Activated CD8-positive, alpha-beta T cell treated with anti-CD3 and anti-CD28 coated beads, Interleukin-2, amount 10 ng/mL, durations not matched to agents 7 days and 5 days (primary cell): ENCODE measurements at regions of chr6 and their contacts with region 1.

Region 1: GRCh38 chr6:29016559-29017427 is 11.7 kb upstream of the ZNF311 start:
- DNase-seq: peak; percentile 90
- ATAC-seq: peak; percentile 90
- H3K4me3 Mint-ChIP-seq: peak overlapping the region; percentile 83
- H3K27ac Mint-ChIP-seq: peak overlapping the region; percentile 83
- H3K4me1 Mint-ChIP-seq: peaks cover 15% of the 10 kb centered on the region
- H3K27me3 Mint-ChIP-seq: peaks cover 32% of the 10 kb centered on the region

Region 2: GRCh38 chr6:28863604-28864320 is 153.0 kb before region 1 on chr6:
- CTCF ChIA-PET with region 1: interaction called, 12 read pairs
- POLR2A ChIA-PET with region 1: interaction called, 3 read pairs
- DNase-seq: peak; percentile 90
- ATAC-seq: peak; percentile 47
- H3K4me3 Mint-ChIP-seq: peak overlapping the region; percentile 89
- H3K27ac Mint-ChIP-seq: peak overlapping the region; percentile 81
- H3K4me1 Mint-ChIP-seq: peaks cover 53% of the 10 kb centered on the region
- H3K27me3 Mint-ChIP-seq: peaks cover 7% of the 10 kb centered on the region

Region 3: GRCh38 chr6:28923318-28924102 is 93.3 kb before region 1 on chr6 and contains the start of gene TRIM27:
- CTCF ChIA-PET with region 1: interaction called, 19 read pairs
- POLR2A ChIA-PET with region 1: interaction called, 3 read pairs
- DNase-seq: peak; percentile 84
- ATAC-seq: peak; percentile 89
- H3K4me3 Mint-ChIP-seq: peak within 1 kb of the TSS; percentile 87
- H3K27ac Mint-ChIP-seq: peak within 1 kb of the TSS; percentile 95
- H3K4me1 Mint-ChIP-seq: peaks cover 39% of the 10 kb centered on the region
- H3K27me3 Mint-ChIP-seq: no peaks in the 10 kb centered on the region
- total RNA-seq, gene TRIM27: 58.3 to 60.1 TPM

Region 4: DNA sequence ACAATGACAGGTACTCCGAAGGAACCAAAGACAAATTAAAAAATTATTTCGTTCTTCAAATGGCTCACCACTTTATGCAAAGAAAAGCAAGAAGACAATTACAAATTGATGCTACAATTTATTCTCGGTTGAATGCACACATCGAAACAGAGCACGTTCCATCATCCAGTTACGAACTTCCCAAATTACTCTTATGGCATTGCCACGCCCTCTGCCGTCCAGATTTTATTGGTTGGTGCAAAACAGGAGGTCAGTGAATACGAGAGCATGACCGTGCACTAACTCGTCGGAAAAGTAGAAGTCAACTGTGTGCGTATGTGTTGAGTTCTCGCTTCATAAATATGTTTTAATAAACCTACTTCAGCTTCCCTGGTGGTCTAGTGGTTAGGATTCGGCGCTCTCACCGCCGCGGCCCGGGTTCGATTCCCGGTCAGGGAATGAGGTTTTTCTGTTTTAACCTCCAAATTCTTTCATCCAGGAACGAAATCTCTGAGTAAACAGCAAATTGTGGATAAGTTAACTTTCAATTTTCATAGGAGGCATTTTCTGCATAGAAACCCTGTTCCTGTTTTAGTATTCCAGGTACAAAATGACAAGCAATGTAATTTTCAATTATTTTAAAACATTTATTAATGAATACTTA is 34.8 kb before region 1 on chr6:
- CTCF ChIA-PET with region 1: interaction called, 25 read pairs
- POLR2A ChIA-PET with region 1: interaction called, 6 read pairs
- DNase-seq: peak; percentile 76
- ATAC-seq: peak; percentile 74
- H3K4me3 Mint-ChIP-seq: peak overlapping the region; percentile 90
- H3K27ac Mint-ChIP-seq: peak overlapping the region; percentile 91
- H3K4me1 Mint-ChIP-seq: peaks cover 60% of the 10 kb centered on the region
- H3K27me3 Mint-ChIP-seq: peaks cover 61% of the 10 kb centered on the region

Region 5: DNA sequence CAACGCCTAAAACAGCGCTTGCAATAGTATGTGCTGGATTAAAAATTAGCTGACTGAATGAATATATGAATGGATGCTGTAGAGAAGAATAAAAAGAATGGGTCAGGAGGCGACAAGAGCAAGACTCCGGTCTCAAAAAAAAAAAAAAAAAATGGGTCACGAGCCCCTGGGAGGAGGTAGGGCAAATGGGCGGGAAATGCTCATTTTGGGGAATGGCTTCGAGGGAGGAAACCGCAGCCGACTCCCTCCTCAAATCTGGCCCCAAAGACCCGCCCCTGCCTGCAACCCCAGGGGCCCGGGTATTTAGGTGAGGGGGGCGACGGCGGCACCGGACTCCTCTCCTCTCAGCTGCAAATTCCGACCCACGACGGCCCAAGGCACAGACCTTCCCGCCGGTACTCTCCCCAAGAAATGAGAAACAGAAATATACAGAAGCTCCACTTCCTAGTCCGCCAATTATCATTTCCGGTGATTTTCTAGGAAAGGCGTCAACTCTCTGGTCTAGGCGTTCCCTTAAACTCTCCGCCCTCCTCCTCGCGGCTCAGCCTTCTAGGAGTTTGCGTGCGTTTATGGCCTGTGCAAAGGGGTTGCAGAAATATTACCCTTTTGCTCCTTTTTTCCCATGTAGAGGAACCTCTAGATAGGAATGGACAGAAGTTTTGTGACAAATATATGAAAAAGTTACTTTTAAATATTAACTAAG is 11.5 kb before region 1 on chr6 and contains the start of gene ZNF311:
- CTCF ChIA-PET with region 1: interaction called, 17 read pairs
- POLR2A ChIA-PET with region 1: interaction called, 7 read pairs
- DNase-seq: peak; percentile 62
- ATAC-seq: peak; percentile 92
- H3K4me3 Mint-ChIP-seq: peak within 1 kb of the TSS; percentile 80
- H3K27ac Mint-ChIP-seq: peak within 1 kb of the TSS; percentile 89
- H3K4me1 Mint-ChIP-seq: peaks cover 21% of the 10 kb centered on the region
- H3K27me3 Mint-ChIP-seq: peaks cover 14% of the 10 kb centered on the region
- total RNA-seq, gene ZNF311: 0.39 to 0.40 TPM